Common myeloid progenitor, CD34-positive (primary cell): ENCODE measurements at regions of chr15 and their contacts with region 1.

Region 1: GRCh38 chr15:58957101-58957973 is 23.9 kb upstream of the SLTM start:
- DNase-seq: peak; percentile 83 to 89 (median 84)
- H3K4me3 ChIP-seq: no peak overlapping the region
- H3K27ac ChIP-seq: no peak overlapping the region
- H3K4me1 ChIP-seq: peaks cover 0 to 10% (median 5%) of the 10 kb centered on the region in 4 experiments
- H3K27me3 ChIP-seq: no peaks in the 10 kb centered on the region

Region 2: GRCh38 chr15:58873267-58873666 is 84.1 kb before region 1 on chr15:
- CTCF ChIA-PET with region 1: no interaction called
- POLR2A ChIA-PET with region 1: no interaction called
- DNase-seq: no peak
- H3K4me3 ChIP-seq: no peak overlapping the region
- H3K27ac ChIP-seq: no peak overlapping the region
- H3K4me1 ChIP-seq: peaks cover 0 to 4% (median 0%) of the 10 kb centered on the region in 4 experiments
- H3K27me3 ChIP-seq: no peaks in the 10 kb centered on the region

Region 3: GRCh38 chr15:58977887-58978286 is 20.6 kb after region 1 on chr15:
- CTCF ChIA-PET with region 1: interaction called, 11 read pairs
- POLR2A ChIA-PET with region 1: no interaction called
- DNase-seq: peak in 1 of 3 donors; percentile 28
- H3K4me3 ChIP-seq: no peak overlapping the region
- H3K27ac ChIP-seq: no peak overlapping the region
- H3K4me1 ChIP-seq: peaks cover 9 to 25% (median 18%) of the 10 kb centered on the region in 4 experiments
- H3K27me3 ChIP-seq: peaks cover 0 to 5% (median 2%) of the 10 kb centered on the region in 5 experiments